ENCODE measurements at regions of chr22 and their contacts with region 1.

Region 1: GRCh38 chr22:24951942-24952836 is at the start of gene KIAA1671:
- DNase-seq: peak; percentile 93
- ATAC-seq: peak; percentile 96
- total RNA-seq, gene KIAA1671: 65.1 TPM

Region 2: DNA sequence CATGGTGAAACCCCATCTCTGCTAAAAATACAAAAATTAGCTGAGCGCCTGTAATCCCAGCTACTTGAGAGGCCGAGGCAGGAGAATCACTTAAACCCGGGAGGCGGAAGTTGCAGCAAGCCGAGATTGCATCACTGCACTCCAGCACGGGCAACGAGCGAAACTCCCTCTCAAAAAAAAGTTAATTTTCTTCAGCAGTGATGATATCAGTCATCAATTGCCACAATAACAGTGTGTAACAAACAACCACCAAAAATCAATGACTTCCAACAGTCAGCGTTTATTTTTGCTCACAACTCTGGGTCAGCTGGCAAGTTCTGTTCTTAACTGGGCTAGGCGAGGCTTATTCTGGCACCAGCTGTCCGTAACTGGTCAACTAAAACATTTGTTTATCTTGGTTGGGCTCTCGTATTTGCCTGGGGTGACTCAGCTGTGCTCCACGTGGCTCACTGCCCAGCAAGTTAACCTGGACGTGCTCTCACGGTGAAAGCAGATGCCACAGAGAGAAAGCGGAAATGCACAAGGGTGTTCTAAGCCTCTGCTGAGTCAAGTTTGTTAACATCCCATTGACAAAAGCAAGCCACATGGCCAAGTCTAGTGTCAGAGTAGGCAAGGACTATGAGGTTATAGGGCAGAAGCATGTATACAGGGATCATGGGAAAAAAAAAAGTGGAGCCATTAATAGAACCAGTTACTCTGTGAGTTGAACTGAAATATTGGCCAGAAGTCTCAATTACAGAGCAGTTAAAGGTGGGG is 57.8 kb before region 1 on chr22:
- intact Hi-C with region 1: no loop called
- DNase-seq: peak; percentile 83
- ATAC-seq: peak; percentile 95

Region 3: DNA sequence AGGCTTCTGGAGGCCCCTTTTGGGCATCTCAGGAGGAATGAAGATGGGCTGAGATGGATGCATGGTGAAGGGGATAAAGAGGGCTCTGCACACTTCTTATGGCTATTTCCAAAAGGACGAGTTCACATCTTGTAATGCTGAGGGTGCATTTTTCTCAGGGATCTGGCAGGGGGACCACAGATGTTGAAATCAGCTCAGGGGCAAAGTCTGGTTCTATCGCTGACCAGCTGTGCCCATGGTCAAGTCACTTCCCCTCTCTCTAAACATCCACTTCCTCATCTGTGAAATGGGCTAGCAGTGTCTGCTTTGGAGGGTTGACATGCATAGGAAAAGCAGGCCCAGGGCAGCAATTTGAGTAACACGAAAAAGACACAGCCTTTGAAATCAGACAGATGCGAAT is 32.2 kb before region 1 on chr22:
- intact Hi-C with region 1: no loop called
- DNase-seq: no peak
- ATAC-seq: no peak

Region 4: GRCh38 chr22:25051073-25051472 is 98.9 kb after region 1 on chr22:
- intact Hi-C with region 1: loop called (anchors 5 kb)
- DNase-seq: no peak
- ATAC-seq: no peak